Activated CD4-positive, alpha-beta memory T cell treated with anti-CD3 and anti-CD28 coated beads, Interleukin-2, amount 10 ng/mL, durations not matched to agents 7 days and 5 days (primary cell): ENCODE measurements at regions of chr11 and their contacts with region 1.

Region 1: GRCh38 chr11:34585735-34586487 is 35.0 kb upstream of the EHF start:
- DNase-seq: no peak
- H3K4me3 Mint-ChIP-seq: no peak overlapping the region
- H3K27ac Mint-ChIP-seq: no peak overlapping the region
- H3K4me1 Mint-ChIP-seq: no peaks in the 10 kb centered on the region
- H3K27me3 Mint-ChIP-seq: peaks cover 38% of the 10 kb centered on the region

Region 2: DNA sequence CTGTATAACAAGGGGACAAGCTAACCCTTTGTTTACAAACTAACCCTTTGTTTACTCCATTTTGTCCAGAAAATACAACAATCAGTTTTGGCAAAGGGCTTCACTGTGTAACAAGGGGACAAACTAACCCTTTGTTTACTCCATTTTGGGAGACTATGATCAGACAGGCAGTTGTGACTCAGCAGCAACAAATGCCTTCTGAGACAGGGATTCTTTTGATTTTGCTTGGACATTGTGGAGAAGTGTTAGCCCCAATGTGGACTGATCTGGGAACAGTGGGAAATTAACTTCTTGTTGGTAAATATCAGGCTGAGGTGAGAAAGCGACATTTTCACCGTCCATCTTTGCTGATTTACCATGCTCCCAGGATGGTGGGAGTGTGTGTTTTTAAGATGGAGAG is 36.0 kb after region 1 on chr11:
- CTCF ChIA-PET with region 1: no interaction called
- POLR2A ChIA-PET with region 1: no interaction called
- DNase-seq: no peak
- H3K4me3 Mint-ChIP-seq: no peak overlapping the region
- H3K27ac Mint-ChIP-seq: no peak overlapping the region
- H3K4me1 Mint-ChIP-seq: peaks cover 21% of the 10 kb centered on the region
- H3K27me3 Mint-ChIP-seq: peaks cover 61% of the 10 kb centered on the region

Region 3: GRCh38 chr11:34639545-34639944 is 53.6 kb after region 1 on chr11:
- CTCF ChIA-PET with region 1: no interaction called
- POLR2A ChIA-PET with region 1: no interaction called
- DNase-seq: no peak
- H3K4me3 Mint-ChIP-seq: no peak overlapping the region
- H3K27ac Mint-ChIP-seq: no peak overlapping the region
- H3K4me1 Mint-ChIP-seq: no peaks in the 10 kb centered on the region
- H3K27me3 Mint-ChIP-seq: peaks cover 50% of the 10 kb centered on the region

Region 4: DNA sequence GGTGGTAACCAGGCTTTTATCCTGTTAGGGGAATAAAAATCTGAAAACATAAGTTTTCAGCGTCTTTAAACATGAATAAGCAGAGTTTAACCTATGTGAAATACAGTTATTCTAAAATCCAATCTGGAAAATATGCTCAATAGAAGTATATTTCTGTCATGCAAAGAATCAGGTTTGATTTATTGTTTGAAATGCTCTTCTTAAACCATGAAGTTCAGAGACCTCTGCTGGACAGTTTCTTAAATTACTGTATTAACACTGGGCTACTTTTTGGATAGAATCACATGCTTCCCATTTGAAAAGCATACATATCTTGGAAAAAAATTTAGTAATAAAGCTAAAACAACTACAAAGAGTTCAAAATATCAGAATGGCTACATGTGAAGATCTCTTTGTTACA is 304.9 kb after region 1 on chr11:
- CTCF ChIA-PET with region 1: interaction called, 34 read pairs
- POLR2A ChIA-PET with region 1: no interaction called
- DNase-seq: no peak
- H3K4me3 Mint-ChIP-seq: no peak overlapping the region
- H3K27ac Mint-ChIP-seq: no peak overlapping the region
- H3K4me1 Mint-ChIP-seq: no peaks in the 10 kb centered on the region
- H3K27me3 Mint-ChIP-seq: no peaks in the 10 kb centered on the region

Region 5: GRCh38 chr11:34898474-34898873 is 312.6 kb after region 1 on chr11:
- CTCF ChIA-PET with region 1: interaction called, 14 read pairs
- POLR2A ChIA-PET with region 1: no interaction called
- DNase-seq: no peak
- H3K4me3 Mint-ChIP-seq: no peak overlapping the region
- H3K27ac Mint-ChIP-seq: no peak overlapping the region
- H3K4me1 Mint-ChIP-seq: no peaks in the 10 kb centered on the region
- H3K27me3 Mint-ChIP-seq: no peaks in the 10 kb centered on the region